Esophagus muscularis mucosa (tissue), 4 donors: ENCODE measurements at regions of chr1 and their contacts with region 1.

Region 1: GRCh38 chr1:53951697-53952096 is 5.5 kb downstream of the LRRC42 start:
- DNase-seq: no peak
- H3K4me3 ChIP-seq: no peak overlapping the region
- H3K27ac ChIP-seq: no peak overlapping the region
- H3K4me1 ChIP-seq: peaks cover 9 to 64% (median 62%) of the 10 kb centered on the region in 4 donors
- H3K27me3 ChIP-seq: no peaks in the 10 kb centered on the region
- CTCF ChIP-seq: no peak
- EP300 ChIP-seq: no peak
- POLR2A ChIP-seq: no peak

Region 2: GRCh38 chr1:53878492-53879105 is 73.1 kb before region 1 on chr1:
- intact Hi-C with region 1: loop called (anchors 2 kb)
- DNase-seq: no peak
- H3K4me3 ChIP-seq: no peak overlapping the region
- H3K27ac ChIP-seq: no peak overlapping the region
- H3K4me1 ChIP-seq: peaks cover 0 to 3% (median 0%) of the 10 kb centered on the region in 4 donors
- H3K27me3 ChIP-seq: no peaks in the 10 kb centered on the region
- CTCF ChIP-seq: peak; percentile 54 to 59 (median 58)
- EP300 ChIP-seq: no peak
- POLR2A ChIP-seq: no peak

Region 3: DNA sequence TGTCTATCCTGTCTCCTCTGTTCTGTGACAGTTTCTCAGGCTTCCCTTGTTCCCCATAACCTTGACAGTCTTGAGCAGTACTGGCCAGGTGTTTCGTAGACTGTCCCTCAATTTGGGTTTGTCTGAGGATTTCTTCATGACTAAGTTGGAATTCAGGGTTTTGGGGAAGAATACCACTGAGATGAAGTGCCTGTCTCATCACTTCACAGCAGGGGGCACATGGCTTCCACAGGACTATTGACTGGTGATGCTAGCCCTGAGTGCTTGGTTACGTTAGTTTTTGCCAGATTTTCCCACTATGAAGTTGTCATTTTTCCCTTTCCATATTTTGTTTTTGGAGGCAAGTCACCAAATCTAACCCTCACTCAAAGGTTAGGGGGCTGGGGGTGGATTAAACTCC is 155.4 kb after region 1 on chr1:
- intact Hi-C with region 1: no loop called
- DNase-seq: no peak
- H3K4me3 ChIP-seq: no peak overlapping the region
- H3K27ac ChIP-seq: no peak overlapping the region
- H3K4me1 ChIP-seq: no peaks in the 10 kb centered on the region
- H3K27me3 ChIP-seq: no peaks in the 10 kb centered on the region
- CTCF ChIP-seq: peak in 1 of 3 experiments; percentile 2
- EP300 ChIP-seq: no peak
- POLR2A ChIP-seq: no peak